ENCODE measurements at regions of chr17 and their contacts with region 1.

Region 1: GRCh38 chr17:55527540-55528118 is 16.4 kb upstream of the SMIM36 start:
- DNase-seq: peak; percentile 74
- H3K4me3 ChIP-seq: no peak overlapping the region; a peak in 1 of 4 replicates
- H3K27ac ChIP-seq: no peak overlapping the region
- H3K4me1 ChIP-seq: peaks cover 0 to 2% of the 10 kb centered on the region in 2 experiments; a peak in 1 of 4 replicates
- H3K27me3 ChIP-seq: no peaks in the 10 kb centered on the region
- CTCF ChIP-seq: peak; percentile 87
- EP300 ChIP-seq: no peak
- RAD21 ChIP-seq: peak; percentile 99

Region 2: GRCh38 chr17:55466671-55467070 is 61.0 kb before region 1 on chr17:
- CTCF ChIA-PET with region 1: no interaction called
- POLR2A ChIA-PET with region 1: no interaction called
- DNase-seq: no peak
- H3K4me3 ChIP-seq: no peak overlapping the region
- H3K27ac ChIP-seq: no peak overlapping the region
- H3K4me1 ChIP-seq: peaks cover 0 to 3% of the 10 kb centered on the region in 2 experiments; a peak in 1 of 4 replicates
- H3K27me3 ChIP-seq: no peaks in the 10 kb centered on the region
- CTCF ChIP-seq: no peak
- EP300 ChIP-seq: no peak
- RAD21 ChIP-seq: no peak

Region 3: DNA sequence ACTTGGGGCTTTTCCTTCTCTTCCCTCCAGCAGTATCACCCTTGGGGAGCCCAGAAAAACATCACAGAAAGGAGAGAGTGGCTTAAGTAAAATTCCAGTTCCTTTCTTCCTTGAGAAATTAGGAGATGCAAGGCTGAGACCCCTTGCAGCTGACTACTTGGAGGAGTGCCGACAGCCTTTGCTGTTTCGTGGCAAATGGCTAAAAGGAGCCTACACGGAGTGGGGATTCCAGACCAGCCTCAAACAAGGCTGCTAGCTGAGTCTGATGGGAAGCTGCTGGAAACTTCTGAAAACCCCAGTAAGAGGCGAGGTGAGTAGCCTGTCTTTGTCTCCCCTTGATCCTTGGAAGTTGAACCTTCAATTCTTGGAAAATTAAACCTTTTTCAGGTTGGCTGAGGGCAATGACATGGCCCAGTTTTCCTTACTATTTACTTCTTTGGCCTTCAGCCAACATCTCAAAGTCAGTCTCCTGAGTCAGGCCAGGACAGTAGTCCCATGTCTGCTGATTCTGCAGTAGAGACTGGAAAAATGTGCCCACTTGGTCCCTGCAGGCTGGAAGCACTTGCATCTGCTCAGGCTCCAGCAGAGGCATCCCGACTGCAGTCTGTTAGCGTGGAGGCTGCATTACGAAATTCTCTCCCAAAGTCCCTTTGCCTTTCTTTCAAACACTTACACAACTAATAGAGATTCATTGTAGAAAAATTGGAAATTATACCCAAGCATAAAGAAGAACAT is 39.8 kb before region 1 on chr17:
- CTCF ChIA-PET with region 1: no interaction called
- POLR2A ChIA-PET with region 1: no interaction called
- DNase-seq: no peak
- H3K4me3 ChIP-seq: no peak overlapping the region
- H3K27ac ChIP-seq: no peak overlapping the region
- H3K4me1 ChIP-seq: no peaks in the 10 kb centered on the region
- H3K27me3 ChIP-seq: no peaks in the 10 kb centered on the region
- CTCF ChIP-seq: no peak
- EP300 ChIP-seq: no peak
- RAD21 ChIP-seq: no peak

Region 4: GRCh38 chr17:55513885-55514591 is 13.6 kb before region 1 on chr17:
- CTCF ChIA-PET with region 1: interaction called, 54 read pairs
- POLR2A ChIA-PET with region 1: interaction called, 3 read pairs
- DNase-seq: peak; percentile 73
- H3K4me3 ChIP-seq: peak overlapping the region in 1 of 2 experiments; percentile 13; a peak in 1 of 4 replicates
- H3K27ac ChIP-seq: no peak overlapping the region
- H3K4me1 ChIP-seq: peaks cover 0 to 4% of the 10 kb centered on the region in 2 experiments; a peak in 2 of 4 replicates
- H3K27me3 ChIP-seq: peaks cover 19% of the 10 kb centered on the region; the same call in 1 of the 2 replicates
- CTCF ChIP-seq: peak; percentile 100
- EP300 ChIP-seq: no peak; a peak in 1 of 4 replicates
- RAD21 ChIP-seq: peak; percentile 99

Region 5: DNA sequence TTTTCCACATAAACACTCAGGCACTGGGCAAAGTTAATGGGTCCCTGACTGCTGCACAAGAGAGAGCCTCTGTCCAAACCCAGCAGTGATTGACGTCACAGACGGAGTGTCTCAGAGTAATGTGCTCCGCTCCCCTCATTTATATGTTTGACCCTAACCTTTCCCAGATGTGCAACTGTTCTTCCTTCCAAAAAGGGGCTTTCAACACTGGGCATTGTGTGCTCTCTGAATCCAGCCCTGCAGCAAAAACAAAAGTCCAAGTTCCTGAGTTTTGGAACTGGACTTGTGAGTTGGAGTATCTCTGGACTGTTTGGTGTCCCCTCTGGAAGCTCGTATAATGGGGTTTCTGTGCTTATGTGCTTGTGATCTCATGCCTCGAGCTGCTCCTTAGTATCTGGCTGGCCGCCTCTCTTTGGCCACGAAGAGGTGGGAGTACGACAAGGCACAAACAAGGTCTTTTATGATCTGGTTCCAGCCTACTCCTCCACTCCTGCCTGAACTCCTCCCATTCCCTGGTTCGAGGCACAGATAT is 60.0 kb after region 1 on chr17:
- CTCF ChIA-PET with region 1: interaction called, 19 read pairs
- POLR2A ChIA-PET with region 1: no interaction called
- DNase-seq: no peak
- H3K4me3 ChIP-seq: no peak overlapping the region
- H3K27ac ChIP-seq: no peak overlapping the region
- H3K4me1 ChIP-seq: peaks cover 2 to 17% of the 10 kb centered on the region in 2 experiments; a peak in 2 of 4 replicates
- H3K27me3 ChIP-seq: no peaks in the 10 kb centered on the region
- CTCF ChIP-seq: no peak
- EP300 ChIP-seq: no peak
- RAD21 ChIP-seq: no peak

Region 6: DNA sequence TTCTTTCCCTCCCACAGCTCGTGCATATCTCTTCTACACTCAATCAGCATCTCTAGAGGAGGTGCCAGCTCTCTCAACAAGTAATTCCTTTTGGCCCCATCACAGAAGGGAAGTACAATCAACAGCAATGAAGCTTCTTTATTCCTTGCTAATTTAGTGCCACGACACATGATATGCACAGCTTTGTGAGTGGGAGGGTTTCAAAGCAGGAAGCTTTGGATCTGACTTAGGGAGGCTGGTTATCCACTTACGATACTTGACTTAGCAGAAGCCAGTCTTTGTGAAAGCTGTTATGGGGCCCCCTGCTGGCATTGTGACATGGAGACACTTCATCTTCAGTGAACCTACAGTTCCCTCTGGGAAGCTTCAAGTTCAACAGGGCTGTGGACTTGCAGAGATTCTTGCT is 114.0 kb after region 1 on chr17:
- CTCF ChIA-PET with region 1: interaction called, 96 read pairs
- POLR2A ChIA-PET with region 1: no interaction called
- DNase-seq: peak; percentile 49
- H3K4me3 ChIP-seq: no peak overlapping the region
- H3K27ac ChIP-seq: no peak overlapping the region
- H3K4me1 ChIP-seq: no peaks in the 10 kb centered on the region; a peak in 1 of 4 replicates
- H3K27me3 ChIP-seq: no peaks in the 10 kb centered on the region; the same call in 1 of the 2 replicates
- CTCF ChIP-seq: peak; percentile 78
- EP300 ChIP-seq: no peak
- RAD21 ChIP-seq: peak; percentile 78

Region 7: DNA sequence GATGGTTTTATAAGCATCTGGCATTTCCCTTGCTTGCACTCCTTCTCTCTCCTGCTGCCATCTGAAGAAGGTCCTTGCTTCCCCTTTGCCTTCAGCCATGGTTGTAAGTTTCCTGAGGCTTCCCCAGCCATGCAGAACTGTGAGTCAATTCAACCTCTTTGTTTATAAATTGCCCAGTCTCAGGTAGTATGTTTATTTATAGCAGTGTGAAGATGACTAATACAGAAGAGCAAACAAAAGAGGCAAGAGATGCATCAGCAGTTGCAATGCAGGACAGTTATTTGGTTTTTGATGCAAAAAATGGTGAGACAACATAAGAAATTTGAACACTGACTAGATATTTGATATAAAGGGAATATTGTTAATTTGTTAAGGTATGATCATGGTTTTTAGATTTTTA is 178.2 kb after region 1 on chr17:
- CTCF ChIA-PET with region 1: interaction called, 45 read pairs
- POLR2A ChIA-PET with region 1: no interaction called
- DNase-seq: no peak
- H3K4me3 ChIP-seq: no peak overlapping the region
- H3K27ac ChIP-seq: no peak overlapping the region; a peak in 1 of 4 replicates
- H3K4me1 ChIP-seq: peaks cover 0 to 18% of the 10 kb centered on the region in 2 experiments; a peak in 2 of 4 replicates
- H3K27me3 ChIP-seq: peaks cover 7% of the 10 kb centered on the region; the same call in 1 of the 2 replicates
- CTCF ChIP-seq: no peak
- EP300 ChIP-seq: no peak
- RAD21 ChIP-seq: no peak

Region 8: DNA sequence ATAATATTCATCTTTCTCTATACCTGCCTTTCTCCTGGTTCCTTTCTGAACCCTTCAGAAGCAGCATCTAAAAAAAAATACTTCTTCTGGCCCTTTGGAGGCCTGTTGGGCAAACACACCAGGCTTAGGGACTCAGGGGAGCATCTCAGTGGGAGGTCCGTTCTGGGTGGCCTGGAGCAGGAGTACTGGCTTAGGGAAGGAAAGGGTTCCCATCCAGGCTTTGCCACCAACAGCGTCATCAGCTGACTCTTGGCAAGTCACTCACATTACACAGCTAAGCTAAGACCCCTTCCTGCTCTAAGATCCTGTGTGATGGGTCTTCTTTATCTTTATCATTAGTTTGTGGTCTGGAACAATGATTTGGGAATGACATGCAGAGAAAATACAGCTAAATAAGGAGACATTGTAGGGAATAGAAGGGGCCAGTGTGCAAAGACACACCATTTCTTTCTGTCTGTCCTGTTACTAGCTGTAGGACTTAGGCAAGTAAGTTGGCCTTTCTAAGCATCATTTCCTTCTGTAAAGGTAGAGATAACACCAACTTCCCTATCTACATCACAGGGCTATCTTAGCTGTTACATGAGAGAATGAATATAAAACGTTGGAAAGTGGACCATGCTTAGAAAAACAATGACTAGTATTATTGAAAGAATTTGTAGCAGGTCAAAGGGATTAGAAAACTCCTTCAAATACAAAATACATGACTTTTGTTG is 233.2 kb after region 1 on chr17:
- CTCF ChIA-PET with region 1: interaction called, 52 read pairs
- POLR2A ChIA-PET with region 1: no interaction called
- DNase-seq: no peak
- H3K4me3 ChIP-seq: no peak overlapping the region
- H3K27ac ChIP-seq: no peak overlapping the region
- H3K4me1 ChIP-seq: peaks cover 0 to 6% of the 10 kb centered on the region in 2 experiments; a peak in 3 of 4 replicates
- H3K27me3 ChIP-seq: no peaks in the 10 kb centered on the region
- CTCF ChIP-seq: no peak
- EP300 ChIP-seq: no peak
- RAD21 ChIP-seq: no peak

Region 9: DNA sequence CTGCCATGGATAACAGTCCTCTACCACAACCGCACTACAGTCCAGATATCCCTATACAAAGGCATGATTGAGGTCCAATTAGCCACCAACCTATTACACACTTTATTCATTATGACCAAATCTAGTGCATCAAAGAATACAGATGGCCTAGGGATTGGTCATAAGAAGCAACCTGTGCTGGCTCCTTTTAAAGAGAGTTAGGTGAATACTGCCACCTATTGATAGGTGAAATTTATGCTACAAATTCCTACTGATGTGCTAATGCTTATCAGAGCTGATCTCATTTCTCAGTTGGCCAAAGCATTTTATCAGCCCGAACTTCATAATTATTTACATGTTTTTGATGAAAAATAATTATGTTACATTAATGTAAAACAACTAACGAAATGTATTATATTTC is 791.9 kb after region 1 on chr17:
- CTCF ChIA-PET with region 1: interaction called, 20 read pairs
- POLR2A ChIA-PET with region 1: no interaction called
- DNase-seq: peak; percentile 33
- H3K4me3 ChIP-seq: no peak overlapping the region
- H3K27ac ChIP-seq: no peak overlapping the region
- H3K4me1 ChIP-seq: no peaks in the 10 kb centered on the region
- H3K27me3 ChIP-seq: peaks cover 4% of the 10 kb centered on the region; the same call in 1 of the 2 replicates
- CTCF ChIP-seq: peak; percentile 92
- EP300 ChIP-seq: no peak
- RAD21 ChIP-seq: peak; percentile 81

Measured in SK-N-SH (cell line).